PC-3 (cell line): ENCODE measurements at regions of chr21 and their contacts with region 1.

Region 1: DNA sequence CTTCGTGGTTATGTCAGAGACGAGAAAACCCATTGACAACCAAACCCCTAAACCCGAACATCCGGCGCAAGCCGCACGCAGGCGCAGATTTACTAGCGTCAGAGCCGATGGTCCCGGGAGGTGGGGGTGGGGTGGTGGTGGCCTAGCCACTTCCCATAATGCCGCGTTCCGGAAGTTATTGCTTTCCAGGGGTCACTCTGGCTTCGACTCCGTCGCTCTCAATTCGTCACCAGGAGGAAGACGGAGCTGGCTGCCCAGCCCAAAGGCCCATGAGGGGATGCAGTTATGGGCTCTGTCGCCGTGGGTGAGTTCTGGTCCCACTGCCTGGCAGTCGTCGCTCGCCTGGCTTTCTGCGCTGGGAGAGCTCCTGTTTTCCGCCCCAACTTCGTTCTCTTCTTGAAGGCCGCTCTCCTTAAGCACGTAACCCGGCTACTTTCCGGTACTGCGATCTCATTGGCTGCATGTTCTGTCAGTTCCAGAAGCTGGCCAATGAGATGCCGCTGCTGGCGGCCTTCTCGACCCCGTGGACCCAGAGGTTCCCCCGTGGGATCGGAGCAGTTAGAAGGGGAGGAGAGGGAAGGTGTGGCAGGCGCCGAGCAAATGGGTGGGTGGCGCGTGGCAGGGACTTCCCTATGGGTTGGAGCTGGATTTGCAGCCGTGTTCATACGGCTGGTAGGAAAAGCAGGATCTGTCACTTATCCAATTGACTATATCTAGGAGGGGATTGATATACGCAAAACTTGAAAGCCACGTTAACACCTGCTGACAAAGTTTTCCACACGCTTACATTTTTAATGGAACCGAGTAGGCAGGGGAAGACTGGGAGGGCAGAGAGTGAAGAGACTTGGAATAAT is at the start of gene USP16:
- DNase-seq: peak; percentile 99
- ATAC-seq: peak; percentile 98
- H3K4me3 ChIP-seq: peak within 1 kb of the TSS; percentile 78
- H3K27ac ChIP-seq: peak within 1 kb of the TSS; percentile 89
- H3K4me1 ChIP-seq: peaks cover 15% of the 10 kb centered on the region
- H3K27me3 ChIP-seq: no peaks in the 10 kb centered on the region
- CTCF ChIP-seq: no peak
- total RNA-seq, gene USP16: 21.2 and 24.1 TPM in 2 replicates

Region 2: GRCh38 chr21:28771790-28772501 is 252.8 kb before region 1 on chr21:
- CTCF ChIA-PET with region 1: no interaction called
- POLR2A ChIA-PET with region 1: no interaction called
- intact Hi-C with region 1: no loop called
- DNase-seq: peak; percentile 65
- ATAC-seq: peak; percentile 71
- H3K4me3 ChIP-seq: no peak overlapping the region
- H3K27ac ChIP-seq: no peak overlapping the region
- H3K4me1 ChIP-seq: peaks cover 13% of the 10 kb centered on the region
- H3K27me3 ChIP-seq: no peaks in the 10 kb centered on the region
- CTCF ChIP-seq: no peak

Region 3: DNA sequence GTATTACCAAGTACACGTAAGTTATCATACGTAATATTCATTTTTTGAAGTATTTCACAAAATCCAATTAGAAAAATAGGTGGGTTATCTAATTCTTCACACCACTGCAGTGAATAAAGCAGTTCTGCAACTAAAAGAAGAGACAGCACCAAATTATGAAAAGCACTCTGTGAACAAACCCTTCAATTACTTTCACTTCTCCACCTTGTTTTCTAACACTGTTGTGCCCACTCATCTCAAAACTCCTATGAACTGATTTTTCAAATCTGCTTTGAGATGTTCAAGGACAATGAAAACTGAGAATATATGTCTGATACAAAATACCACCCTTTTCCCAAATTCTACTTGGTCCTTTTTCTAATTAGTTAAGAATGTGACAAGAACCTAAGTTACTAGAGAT is 71.5 kb before region 1 on chr21:
- CTCF ChIA-PET with region 1: no interaction called
- POLR2A ChIA-PET with region 1: interaction called, 12 read pairs
- intact Hi-C with region 1: no loop called
- DNase-seq: no peak
- ATAC-seq: no peak
- H3K4me3 ChIP-seq: no peak overlapping the region
- H3K27ac ChIP-seq: no peak overlapping the region
- H3K4me1 ChIP-seq: peaks cover 16% of the 10 kb centered on the region
- H3K27me3 ChIP-seq: no peaks in the 10 kb centered on the region
- CTCF ChIP-seq: no peak

Region 4: GRCh38 chr21:28992526-28993292 is 32.0 kb before region 1 on chr21 and contains the start of gene LTN1:
- CTCF ChIA-PET with region 1: no interaction called
- POLR2A ChIA-PET with region 1: interaction called, 9 read pairs
- intact Hi-C with region 1: loop called (anchors 2 kb)
- DNase-seq: peak; percentile 99
- ATAC-seq: peak; percentile 98
- H3K4me3 ChIP-seq: peak within 1 kb of the TSS; percentile 83
- H3K27ac ChIP-seq: peak within 1 kb of the TSS; percentile 60
- H3K4me1 ChIP-seq: peaks cover 23% of the 10 kb centered on the region
- H3K27me3 ChIP-seq: no peaks in the 10 kb centered on the region
- CTCF ChIP-seq: no peak
- total RNA-seq, gene LTN1: 16.4 and 21.0 TPM in 2 replicates

Region 5: DNA sequence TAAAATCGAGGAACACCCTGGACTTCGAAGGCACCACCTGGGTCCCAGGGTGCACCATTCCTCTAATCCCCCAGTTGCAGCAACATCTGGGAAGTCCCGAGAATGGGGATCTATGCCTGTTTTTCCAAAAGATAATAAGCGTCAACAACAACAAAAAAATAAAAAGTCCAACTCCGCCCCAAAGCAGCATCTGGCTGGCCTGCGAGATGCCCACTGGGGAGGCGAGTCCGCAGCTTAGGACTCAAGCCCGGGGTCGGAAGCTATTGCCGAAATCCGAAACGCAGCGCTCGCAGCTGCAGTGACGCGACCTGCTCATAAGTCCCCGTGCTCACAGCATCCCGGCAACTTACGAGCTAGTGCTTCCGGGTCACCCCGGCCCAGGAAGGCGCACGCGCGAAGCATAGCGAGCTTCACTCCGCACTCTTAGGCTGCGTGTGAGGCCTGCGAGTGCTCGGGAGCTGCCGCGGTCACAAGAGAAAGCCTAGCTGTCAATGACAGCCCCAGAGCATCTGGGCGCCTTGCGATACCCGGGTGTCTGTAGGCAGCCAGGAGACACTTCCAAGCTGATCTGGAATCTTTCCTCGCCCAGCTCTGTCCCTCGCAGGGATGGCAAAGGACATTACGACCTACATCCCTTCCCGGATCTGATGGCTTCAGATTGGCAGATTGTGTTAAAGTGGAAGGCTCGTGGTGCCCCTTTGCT is 22.1 kb before region 1 on chr21:
- CTCF ChIA-PET with region 1: no interaction called
- POLR2A ChIA-PET with region 1: interaction called, 15 read pairs
- intact Hi-C with region 1: no loop called
- DNase-seq: peak; percentile 89
- ATAC-seq: peak; percentile 97
- H3K4me3 ChIP-seq: peak overlapping the region; percentile 74
- H3K27ac ChIP-seq: peak overlapping the region; percentile 56
- H3K4me1 ChIP-seq: peaks cover 3% of the 10 kb centered on the region; the same call in 1 of the 2 replicates
- H3K27me3 ChIP-seq: no peaks in the 10 kb centered on the region
- CTCF ChIP-seq: no peak

Region 6: DNA sequence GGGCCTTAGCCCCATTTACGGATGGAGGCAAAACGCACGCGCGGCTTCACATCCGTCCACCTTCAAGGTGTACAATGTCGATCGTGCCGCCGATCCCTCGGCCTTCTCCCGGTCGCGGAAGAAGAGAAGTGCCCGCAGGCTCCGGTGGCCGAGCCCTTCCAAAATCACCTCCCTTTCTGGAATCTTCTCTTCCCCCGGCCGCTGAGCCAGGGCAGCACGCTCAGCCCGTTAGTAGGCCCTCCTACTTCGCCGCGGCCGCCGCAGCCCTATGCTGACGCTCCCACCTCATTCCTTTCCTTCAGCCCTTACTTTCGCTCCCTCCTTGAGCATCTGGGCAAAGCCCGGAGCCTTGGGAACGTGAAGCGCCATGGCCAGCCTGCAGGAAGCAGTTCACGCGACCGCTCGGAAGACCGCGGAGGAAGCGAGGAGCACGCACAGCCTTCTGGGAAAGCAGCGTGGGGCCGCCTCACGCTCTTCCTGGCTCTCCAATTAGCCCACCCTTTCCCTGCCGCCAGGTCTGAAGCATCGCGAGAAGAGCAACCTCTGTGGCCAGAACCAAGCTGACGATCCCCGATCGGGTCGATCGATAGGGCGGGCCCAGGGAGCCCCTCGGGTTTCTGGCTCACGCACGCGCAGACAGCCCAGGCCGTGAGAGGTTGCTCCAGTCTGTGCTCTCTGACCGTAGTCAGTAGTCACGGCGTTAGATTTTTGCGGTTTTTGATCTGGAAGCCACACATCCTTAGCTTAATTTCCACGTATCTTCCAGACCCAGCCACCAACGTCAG is 48.7 kb after region 1 on chr21 and contains the start of gene CCT8:
- CTCF ChIA-PET with region 1: no interaction called
- POLR2A ChIA-PET with region 1: interaction called, 6 read pairs
- intact Hi-C with region 1: loop called (anchors 2 kb)
- DNase-seq: peak; percentile 100
- ATAC-seq: peak; percentile 85
- H3K4me3 ChIP-seq: peak within 1 kb of the TSS; percentile 86
- H3K27ac ChIP-seq: peak within 1 kb of the TSS; percentile 60
- H3K4me1 ChIP-seq: peaks cover 44% of the 10 kb centered on the region
- H3K27me3 ChIP-seq: no peaks in the 10 kb centered on the region
- CTCF ChIP-seq: no peak
- total RNA-seq, gene CCT8: 228 and 244 TPM in 2 replicates

Region 7: DNA sequence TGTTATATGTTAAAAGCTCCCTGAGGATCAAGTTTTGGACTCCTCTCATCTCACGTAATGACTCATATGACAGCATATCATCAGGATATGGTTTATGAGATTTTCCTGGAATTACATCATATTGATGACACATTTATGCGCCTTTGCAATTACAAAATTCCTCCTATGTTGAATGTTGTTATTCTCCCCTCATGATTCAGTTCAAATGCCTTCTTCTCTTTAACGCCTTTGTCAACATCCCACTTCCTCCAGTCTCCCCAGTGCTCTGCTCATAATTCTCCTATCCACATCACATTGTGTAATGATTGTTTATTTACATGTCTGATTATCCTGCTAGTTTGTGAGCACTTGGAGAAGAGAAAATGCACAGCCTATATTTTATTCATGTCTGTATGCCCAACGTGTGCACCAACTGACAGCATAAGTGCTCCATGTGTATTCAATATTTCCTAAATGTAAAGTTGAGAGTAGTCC is 193.2 kb after region 1 on chr21:
- CTCF ChIA-PET with region 1: no interaction called
- POLR2A ChIA-PET with region 1: no interaction called
- intact Hi-C with region 1: no loop called
- DNase-seq: peak; percentile 98
- ATAC-seq: peak; percentile 92
- H3K4me3 ChIP-seq: peak overlapping the region; percentile 44; the same call in 1 of the 2 replicates
- H3K27ac ChIP-seq: peak overlapping the region; percentile 91
- H3K4me1 ChIP-seq: peaks cover 34% of the 10 kb centered on the region
- H3K27me3 ChIP-seq: no peaks in the 10 kb centered on the region
- CTCF ChIP-seq: no peak